ENCODE measurements at regions of chr16 and their contacts with region 1.

Region 1: GRCh38 chr16:30091474-30092372 is at the start of gene TBX6:
- DNase-seq: peak; percentile 96
- H3K4me3 Mint-ChIP-seq: peak within 1 kb of the TSS; percentile 83
- H3K27ac Mint-ChIP-seq: peak within 1 kb of the TSS; percentile 94
- H3K4me1 Mint-ChIP-seq: peaks cover 44% of the 10 kb centered on the region
- H3K27me3 Mint-ChIP-seq: no peaks in the 10 kb centered on the region
- total RNA-seq, gene TBX6: 2.3 to 2.9 TPM

Region 2: GRCh38 chr16:29815793-29816693 is 275.7 kb before region 1 on chr16 and contains the start of gene PAGR1:
- CTCF ChIA-PET with region 1: no interaction called
- POLR2A ChIA-PET with region 1: no interaction called
- intact Hi-C with region 1: loop called (anchors 1 kb)
- DNase-seq: peak; percentile 99
- H3K4me3 Mint-ChIP-seq: peak within 1 kb of the TSS; percentile 98
- H3K27ac Mint-ChIP-seq: peak within 1 kb of the TSS; percentile 90
- H3K4me1 Mint-ChIP-seq: peaks cover 41% of the 10 kb centered on the region
- H3K27me3 Mint-ChIP-seq: no peaks in the 10 kb centered on the region
- total RNA-seq, gene PAGR1: 21.9 to 24.0 TPM

Region 3: DNA sequence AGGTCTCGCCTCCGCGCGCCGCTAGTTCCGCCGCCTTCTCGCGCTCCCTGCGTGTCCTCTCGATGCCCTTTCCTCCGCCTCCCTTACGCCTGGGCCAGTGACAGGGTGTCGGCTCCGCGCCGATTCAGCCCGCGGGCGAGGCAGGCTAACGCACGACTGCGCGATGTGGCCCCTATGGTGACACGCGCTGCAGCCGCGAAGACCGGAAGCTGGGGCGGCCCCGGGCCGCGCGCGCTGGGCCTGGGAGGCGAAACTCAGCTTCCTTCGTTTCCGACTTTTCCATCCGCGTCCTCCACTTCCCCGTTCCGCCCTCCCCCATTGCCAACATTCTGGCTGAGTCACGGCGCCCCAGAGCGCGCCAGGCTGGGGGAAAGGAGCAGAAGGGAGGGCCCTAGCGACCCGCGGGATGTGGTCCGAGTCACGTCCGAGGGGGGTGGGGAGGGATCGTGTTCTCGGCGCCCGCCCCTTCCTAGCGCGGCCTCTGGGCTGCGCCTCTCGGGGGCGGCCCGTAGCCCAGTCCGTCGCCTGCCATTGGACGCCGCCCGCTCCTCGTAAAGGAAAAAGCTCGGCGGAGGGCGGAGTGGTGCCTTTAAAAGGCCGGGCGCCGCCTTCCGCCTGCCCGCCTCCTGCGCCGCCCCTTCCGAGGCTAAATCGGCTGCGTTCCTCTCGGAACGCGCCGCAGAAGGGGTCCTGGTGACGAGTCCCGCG is 26.4 kb before region 1 on chr16 and contains the start of gene ALDOA:
- CTCF ChIA-PET with region 1: interaction called, 43 read pairs
- POLR2A ChIA-PET with region 1: interaction called, 35 read pairs
- intact Hi-C with region 1: loop called (anchors 1 kb)
- DNase-seq: peak; percentile 98
- H3K4me3 Mint-ChIP-seq: peak within 1 kb of the TSS; percentile 97
- H3K27ac Mint-ChIP-seq: peak within 1 kb of the TSS; percentile 99
- H3K4me1 Mint-ChIP-seq: peaks cover 34% of the 10 kb centered on the region
- H3K27me3 Mint-ChIP-seq: no peaks in the 10 kb centered on the region
- total RNA-seq, gene ALDOA: 1,724 to 1,734 TPM

Region 4: GRCh38 chr16:30104494-30104968 is 12.8 kb after region 1 on chr16:
- CTCF ChIA-PET with region 1: interaction called, 23 read pairs
- POLR2A ChIA-PET with region 1: no interaction called
- intact Hi-C with region 1: no loop called
- DNase-seq: no peak
- H3K4me3 Mint-ChIP-seq: no peak overlapping the region
- H3K27ac Mint-ChIP-seq: no peak overlapping the region
- H3K4me1 Mint-ChIP-seq: no peaks in the 10 kb centered on the region
- H3K27me3 Mint-ChIP-seq: no peaks in the 10 kb centered on the region

Region 5: GRCh38 chr16:30122604-30123160 is 31.0 kb after region 1 on chr16:
- CTCF ChIA-PET with region 1: interaction called, 10 read pairs
- POLR2A ChIA-PET with region 1: interaction called, 3 read pairs
- intact Hi-C with region 1: loop called (anchors 1 kb)
- DNase-seq: peak; percentile 35
- H3K4me3 Mint-ChIP-seq: peak overlapping the region; percentile 87
- H3K27ac Mint-ChIP-seq: peak overlapping the region; percentile 85
- H3K4me1 Mint-ChIP-seq: peaks cover 18% of the 10 kb centered on the region
- H3K27me3 Mint-ChIP-seq: no peaks in the 10 kb centered on the region

Region 6: DNA sequence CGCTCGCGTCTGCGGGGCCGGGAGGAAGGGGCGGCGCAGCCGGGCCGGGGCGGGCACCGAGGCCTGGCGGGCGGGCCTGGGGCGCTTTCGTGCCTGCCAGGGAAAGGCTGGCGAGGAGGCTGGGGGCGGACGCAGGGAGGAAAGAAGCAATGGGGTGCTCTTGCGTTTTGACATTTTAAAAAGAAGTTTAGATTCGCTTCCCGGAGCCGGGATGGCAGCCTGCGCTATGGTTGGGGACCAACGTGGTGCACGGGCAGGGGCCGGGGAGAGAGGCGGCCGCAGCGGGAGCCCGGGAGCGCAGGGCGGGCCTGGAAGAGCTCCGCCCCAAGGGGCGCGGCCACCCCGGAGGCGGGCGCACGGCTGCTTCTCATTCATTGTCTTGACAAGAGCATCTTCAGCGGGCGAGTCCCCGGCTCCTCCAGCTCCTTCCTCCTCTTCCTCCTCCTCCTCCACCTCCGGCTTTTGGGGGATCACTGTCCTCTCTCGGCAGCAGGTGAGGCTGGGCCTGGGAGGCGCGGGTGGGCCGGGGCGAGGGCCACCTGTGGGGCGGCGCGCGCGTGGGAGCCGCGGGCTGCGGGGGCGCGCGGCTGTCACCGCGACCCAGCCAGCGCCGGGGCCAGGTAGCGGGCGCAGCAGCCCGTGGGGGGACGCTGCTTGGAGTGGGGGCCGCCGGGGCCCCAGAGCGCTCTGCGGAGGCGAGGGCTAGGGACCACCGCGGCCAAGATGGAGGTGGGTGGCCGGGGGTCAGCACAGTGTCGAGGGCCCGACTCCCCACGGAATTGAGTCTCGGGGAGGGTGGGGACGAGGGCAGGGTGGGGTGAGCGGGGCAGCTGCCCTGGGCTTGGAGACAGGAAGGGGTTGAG is 91.7 kb after region 1 on chr16 and contains the start of gene CORO1A:
- CTCF ChIA-PET with region 1: interaction called, 32 read pairs
- POLR2A ChIA-PET with region 1: interaction called, 12 read pairs
- intact Hi-C with region 1: no loop called
- DNase-seq: peak; percentile 92
- H3K4me3 Mint-ChIP-seq: peak within 1 kb of the TSS; percentile 100
- H3K27ac Mint-ChIP-seq: peak within 1 kb of the TSS; percentile 100
- H3K4me1 Mint-ChIP-seq: peaks cover 24% of the 10 kb centered on the region
- H3K27me3 Mint-ChIP-seq: no peaks in the 10 kb centered on the region
- total RNA-seq, gene CORO1A: 1,027 to 1,051 TPM

Region 7: GRCh38 chr16:30407102-30407803 is 315.5 kb after region 1 on chr16 and contains the start of gene ZNF771:
- CTCF ChIA-PET with region 1: interaction called, 13 read pairs
- POLR2A ChIA-PET with region 1: interaction called, 4 read pairs
- intact Hi-C with region 1: no loop called
- DNase-seq: peak; percentile 94
- H3K4me3 Mint-ChIP-seq: peak within 1 kb of the TSS; percentile 95
- H3K27ac Mint-ChIP-seq: peak within 1 kb of the TSS; percentile 91
- H3K4me1 Mint-ChIP-seq: peaks cover 25% of the 10 kb centered on the region
- H3K27me3 Mint-ChIP-seq: no peaks in the 10 kb centered on the region
- total RNA-seq, gene ZNF771: 5.4 to 5.7 TPM

Region 8: GRCh38 chr16:30728899-30729672 is 637.4 kb after region 1 on chr16:
- CTCF ChIA-PET with region 1: no interaction called
- POLR2A ChIA-PET with region 1: no interaction called
- intact Hi-C with region 1: no loop called
- DNase-seq: no peak
- H3K4me3 Mint-ChIP-seq: no peak overlapping the region
- H3K27ac Mint-ChIP-seq: no peak overlapping the region
- H3K4me1 Mint-ChIP-seq: peaks cover 9% of the 10 kb centered on the region
- H3K27me3 Mint-ChIP-seq: no peaks in the 10 kb centered on the region